Activated B cell treated with CpG ODN at 0.5 μM for 24 hours (primary cell): ENCODE measurements at regions of chr3 and their contacts with region 1.

Region 1: GRCh38 chr3:129003578-129004160 is 2.6 kb downstream of the EFCC1 start:
- DNase-seq: peak; percentile 34
- ATAC-seq: peak; percentile 80
- H3K4me3 Mint-ChIP-seq: peak overlapping the region; percentile 44
- H3K27ac Mint-ChIP-seq: no peak overlapping the region
- H3K4me1 Mint-ChIP-seq: peaks cover 18% of the 10 kb centered on the region
- H3K27me3 Mint-ChIP-seq: peaks cover 45% of the 10 kb centered on the region
- CTCF ChIP-seq: no peak

Region 2: DNA sequence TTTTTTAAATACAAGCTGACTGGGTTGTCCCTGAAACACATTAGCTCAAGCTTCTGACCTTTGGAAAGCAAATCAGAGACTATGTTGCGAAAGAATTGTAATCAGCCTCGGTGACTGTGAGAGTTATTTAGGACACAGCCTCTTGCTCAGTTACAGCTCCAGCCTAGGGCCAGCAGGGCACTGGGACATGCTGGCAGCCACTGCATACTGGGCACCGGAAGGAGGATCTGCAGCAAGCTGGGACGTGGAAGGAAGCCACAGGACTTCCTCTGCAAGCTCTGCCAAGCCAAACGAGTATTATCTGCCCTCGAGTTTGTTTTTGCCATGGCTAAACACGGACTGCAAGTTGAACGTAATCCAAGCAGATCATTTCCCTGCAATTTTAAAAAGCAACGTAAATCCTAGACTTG is 221.3 kb after region 1 on chr3:
- CTCF ChIA-PET with region 1: no interaction called
- POLR2A ChIA-PET with region 1: no interaction called
- intact Hi-C with region 1: no loop called
- DNase-seq: no peak
- ATAC-seq: no peak
- H3K4me3 Mint-ChIP-seq: no peak overlapping the region
- H3K27ac Mint-ChIP-seq: no peak overlapping the region
- H3K4me1 Mint-ChIP-seq: peaks cover 29% of the 10 kb centered on the region
- H3K27me3 Mint-ChIP-seq: no peaks in the 10 kb centered on the region
- CTCF ChIP-seq: no peak

Region 3: DNA sequence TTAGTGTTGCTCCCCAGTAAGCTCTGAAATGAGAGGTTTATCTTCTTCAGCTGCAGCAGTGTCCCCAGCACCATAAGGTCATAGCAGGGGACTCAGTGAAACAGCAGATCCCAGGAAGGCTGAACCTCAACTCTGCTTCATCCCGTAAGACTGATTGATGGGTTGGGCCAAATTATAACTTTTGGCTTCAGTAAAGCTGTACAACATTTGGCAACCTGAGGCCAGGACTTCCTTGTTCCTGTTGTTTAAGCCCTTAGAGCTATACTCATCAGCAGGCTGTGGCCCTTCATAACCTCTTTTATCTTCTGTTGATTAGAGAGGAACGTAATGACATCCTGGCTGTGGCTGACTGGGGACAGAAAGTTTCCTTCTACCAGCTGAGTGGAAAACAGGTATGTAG is 465.4 kb after region 1 on chr3:
- CTCF ChIA-PET with region 1: no interaction called
- POLR2A ChIA-PET with region 1: no interaction called
- intact Hi-C with region 1: no loop called
- DNase-seq: no peak
- ATAC-seq: no peak
- H3K4me3 Mint-ChIP-seq: no peak overlapping the region
- H3K27ac Mint-ChIP-seq: no peak overlapping the region
- H3K4me1 Mint-ChIP-seq: no peaks in the 10 kb centered on the region
- H3K27me3 Mint-ChIP-seq: no peaks in the 10 kb centered on the region
- CTCF ChIP-seq: no peak

Region 4: DNA sequence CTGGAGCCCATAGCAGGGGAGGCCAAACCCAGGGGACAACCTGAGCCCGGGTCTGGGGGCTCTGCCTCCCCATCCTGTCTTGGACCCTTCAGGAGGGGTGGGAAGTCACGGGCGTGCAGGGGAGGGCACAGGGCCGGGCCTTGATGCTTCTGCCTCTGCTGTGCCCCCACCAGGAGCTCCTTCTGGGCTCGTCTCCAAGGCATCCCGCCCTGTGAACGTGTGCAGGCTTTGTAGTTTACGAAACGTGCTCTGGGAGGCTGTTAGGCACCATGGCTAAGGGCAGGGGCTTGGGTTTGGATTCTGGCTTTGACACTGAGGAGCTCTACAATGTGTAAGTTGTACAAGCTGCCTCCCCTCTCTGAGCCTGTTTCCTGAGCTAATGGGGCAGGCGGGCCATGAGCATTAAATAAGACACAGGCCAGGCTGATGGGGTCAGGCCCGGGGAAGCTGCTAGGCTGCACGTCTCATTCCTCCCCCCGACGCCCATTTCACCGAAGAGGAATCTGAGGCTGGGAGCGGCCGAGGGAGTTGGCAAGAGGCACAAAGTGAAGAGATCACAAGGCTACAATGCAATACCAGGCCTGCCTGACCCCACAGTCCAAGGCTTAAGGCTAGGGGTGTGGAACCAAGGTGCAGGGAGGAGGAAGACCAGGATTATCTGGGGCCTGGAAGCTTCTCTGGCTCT is 583.2 kb after region 1 on chr3:
- CTCF ChIA-PET with region 1: no interaction called
- POLR2A ChIA-PET with region 1: interaction called, 13 read pairs
- intact Hi-C with region 1: no loop called
- DNase-seq: no peak
- ATAC-seq: no peak
- H3K4me3 Mint-ChIP-seq: no peak overlapping the region
- H3K27ac Mint-ChIP-seq: no peak overlapping the region
- H3K4me1 Mint-ChIP-seq: peaks cover 8% of the 10 kb centered on the region
- H3K27me3 Mint-ChIP-seq: peaks cover 4% of the 10 kb centered on the region
- CTCF ChIP-seq: no peak